ENCODE measurements at regions of chr11 and their contacts with region 1.

Region 1: GRCh38 chr11:78645226-78646202 is 70.8 kb upstream of the NARS2 start:
- DNase-seq: peak; percentile 48
- H3K4me3 ChIP-seq: no peak overlapping the region
- H3K27ac ChIP-seq: no peak overlapping the region
- H3K27me3 ChIP-seq: no peaks in the 10 kb centered on the region
- CTCF ChIP-seq: peak; percentile 95

Region 2: DNA sequence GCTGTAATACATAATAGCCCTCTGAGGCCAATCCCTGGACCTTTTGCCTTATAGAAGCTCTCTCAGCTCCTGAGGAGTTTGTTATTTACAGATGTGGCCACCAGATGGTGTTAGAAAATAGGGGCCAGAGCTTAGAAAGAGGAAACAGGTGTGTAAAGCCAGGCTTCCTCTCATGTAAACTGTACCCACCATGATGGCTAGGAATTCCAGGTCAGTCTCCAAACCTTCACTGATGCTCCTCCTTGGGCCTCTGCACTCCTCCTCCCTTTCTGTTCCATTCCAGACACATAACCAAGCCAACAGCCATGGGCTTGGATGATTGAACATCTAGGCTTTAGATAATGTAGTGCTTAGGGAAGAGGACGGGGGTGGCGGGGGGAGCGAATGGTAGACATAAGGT is 417.0 kb before region 1 on chr11:
- CTCF ChIA-PET with region 1: no interaction called
- POLR2A ChIA-PET with region 1: no interaction called
- DNase-seq: peak; percentile 15
- H3K4me3 ChIP-seq: no peak overlapping the region
- H3K27ac ChIP-seq: no peak overlapping the region
- H3K27me3 ChIP-seq: no peaks in the 10 kb centered on the region
- CTCF ChIP-seq: peak; percentile 62

Region 3: DNA sequence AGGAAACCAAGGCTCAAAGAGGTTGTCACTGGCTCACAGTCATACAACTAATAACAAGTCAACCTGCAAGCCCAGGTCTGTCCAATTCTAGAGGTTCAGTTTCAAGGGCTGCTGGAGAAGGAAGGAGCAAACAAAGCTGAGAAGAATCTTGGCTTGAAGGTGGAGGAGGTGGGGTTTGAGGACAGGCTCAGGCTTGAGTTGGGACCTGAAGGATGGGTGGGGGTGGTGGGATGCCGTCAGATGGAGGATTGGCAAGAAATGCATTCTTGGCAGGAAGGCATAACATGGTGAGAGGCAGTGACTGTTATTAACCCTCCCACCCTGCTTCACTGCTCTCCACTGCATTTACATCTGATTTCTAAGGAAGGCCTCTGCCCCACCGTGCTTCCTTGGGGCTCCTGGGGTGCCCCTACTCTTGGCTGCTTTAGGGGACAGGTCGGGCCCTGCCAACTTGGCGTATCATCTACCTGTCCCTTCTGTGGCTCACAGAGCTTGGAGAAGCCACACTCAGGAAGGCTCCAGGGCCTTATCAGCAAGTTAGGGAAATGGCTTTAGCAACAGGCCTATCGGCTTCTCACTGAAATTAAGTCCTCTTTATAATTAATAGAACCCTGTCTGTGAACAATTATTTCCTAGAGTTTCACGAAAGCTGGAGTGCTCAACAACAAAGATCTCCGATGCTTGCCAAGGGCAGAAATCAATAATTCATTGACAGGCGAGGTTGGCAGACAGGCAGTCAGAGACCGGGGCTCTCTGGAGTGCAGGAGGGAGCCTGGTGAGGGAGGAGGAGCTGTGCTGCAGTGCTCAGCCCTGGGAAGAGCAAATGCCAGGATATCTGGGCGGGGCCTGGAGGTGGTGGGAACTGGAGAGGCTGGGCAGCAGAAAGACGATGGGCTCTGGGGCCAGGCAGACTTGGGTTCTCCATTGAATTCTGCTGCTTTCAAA is 14.1 kb after region 1 on chr11:
- CTCF ChIA-PET with region 1: interaction called, 27 read pairs
- POLR2A ChIA-PET with region 1: no interaction called
- DNase-seq: no peak
- H3K4me3 ChIP-seq: no peak overlapping the region
- H3K27ac ChIP-seq: no peak overlapping the region
- H3K27me3 ChIP-seq: no peaks in the 10 kb centered on the region
- CTCF ChIP-seq: no peak

Region 4: GRCh38 chr11:78791254-78791653 is 145.7 kb after region 1 on chr11:
- CTCF ChIA-PET with region 1: interaction called, 57 read pairs
- POLR2A ChIA-PET with region 1: no interaction called
- DNase-seq: no peak
- H3K4me3 ChIP-seq: no peak overlapping the region
- H3K27ac ChIP-seq: no peak overlapping the region
- H3K27me3 ChIP-seq: no peaks in the 10 kb centered on the region
- CTCF ChIP-seq: no peak

Region 5: DNA sequence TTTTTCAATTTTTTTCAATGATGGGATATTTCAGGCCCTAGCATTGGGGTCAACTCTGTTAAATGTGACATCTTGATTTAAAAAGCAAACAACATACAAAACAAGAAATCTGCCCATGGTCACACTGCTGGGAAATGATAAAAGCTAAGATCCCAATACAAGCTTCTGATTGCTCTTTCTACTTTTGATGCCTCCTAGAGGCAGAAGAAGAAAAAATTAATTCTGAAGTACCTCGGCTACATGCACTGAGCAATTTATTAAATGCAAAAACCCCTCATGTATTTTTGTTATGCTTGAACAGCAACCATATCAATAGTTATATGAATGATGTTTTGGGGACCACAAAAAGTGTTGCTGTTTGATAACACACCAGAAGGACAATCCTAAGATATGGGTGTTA is 271.2 kb after region 1 on chr11:
- CTCF ChIA-PET with region 1: interaction called, 17 read pairs
- POLR2A ChIA-PET with region 1: no interaction called
- DNase-seq: no peak
- H3K4me3 ChIP-seq: no peak overlapping the region
- H3K27ac ChIP-seq: no peak overlapping the region
- H3K27me3 ChIP-seq: peaks cover 5% of the 10 kb centered on the region
- CTCF ChIP-seq: peak; percentile 28; the same call in 1 of the 2 replicates

Region 6: GRCh38 chr11:79069504-79069903 is 424.0 kb after region 1 on chr11:
- CTCF ChIA-PET with region 1: interaction called, 15 read pairs
- POLR2A ChIA-PET with region 1: no interaction called
- DNase-seq: no peak
- H3K4me3 ChIP-seq: no peak overlapping the region
- H3K27ac ChIP-seq: no peak overlapping the region
- H3K27me3 ChIP-seq: no peaks in the 10 kb centered on the region
- CTCF ChIP-seq: no peak

Region 7: GRCh38 chr11:79100093-79100910 is 454.8 kb after region 1 on chr11:
- CTCF ChIA-PET with region 1: interaction called, 128 read pairs
- POLR2A ChIA-PET with region 1: no interaction called
- DNase-seq: no peak
- H3K4me3 ChIP-seq: no peak overlapping the region
- H3K27ac ChIP-seq: no peak overlapping the region
- H3K27me3 ChIP-seq: no peaks in the 10 kb centered on the region
- CTCF ChIP-seq: peak; percentile 88

Region 8: DNA sequence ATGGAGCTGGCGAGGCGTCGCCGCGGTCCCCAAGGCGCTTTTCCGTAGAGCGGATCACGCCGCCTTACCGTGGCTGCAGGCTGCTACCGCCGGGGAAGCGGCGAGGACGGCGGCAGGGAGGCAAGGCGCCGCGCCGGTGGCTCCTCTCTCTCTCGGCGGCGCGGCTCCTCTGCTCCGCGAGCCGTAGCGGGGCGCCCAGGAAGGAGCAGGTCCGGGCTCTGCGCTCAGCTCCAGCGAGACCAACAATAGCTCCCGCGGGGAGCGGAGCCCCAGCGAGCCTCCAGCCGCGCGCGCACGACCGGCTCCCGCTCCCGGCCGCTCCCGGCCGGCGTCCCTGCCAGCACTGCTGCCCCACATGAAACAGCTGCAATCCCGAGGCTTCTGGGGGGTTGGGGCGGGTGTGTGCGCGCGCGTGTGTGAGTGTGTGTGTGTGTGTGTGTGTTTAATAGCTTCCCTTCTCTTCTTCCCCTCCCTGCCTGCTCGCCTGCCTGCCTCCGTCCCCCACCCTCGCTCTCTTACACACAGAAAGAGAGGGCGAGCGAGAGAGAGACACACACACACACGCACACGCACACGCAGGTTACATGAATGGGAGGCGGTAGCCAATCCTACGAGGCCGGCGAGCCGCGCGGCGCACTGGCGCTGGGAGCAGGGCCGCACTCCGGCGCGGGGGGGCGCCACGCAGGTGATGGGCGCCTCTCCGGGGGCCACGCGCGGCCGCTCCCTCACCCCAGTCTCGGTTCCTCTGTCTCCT is 795.1 kb after region 1 on chr11 and contains the start of gene TENM4:
- CTCF ChIA-PET with region 1: interaction called, 16 read pairs
- POLR2A ChIA-PET with region 1: no interaction called
- DNase-seq: peak; percentile 77
- H3K4me3 ChIP-seq: peak within 1 kb of the TSS; percentile 87
- H3K27ac ChIP-seq: peak within 1 kb of the TSS; percentile 68
- H3K27me3 ChIP-seq: peaks cover 6% of the 10 kb centered on the region
- CTCF ChIP-seq: no peak
- polyA plus RNA-seq, gene TENM4: 5.5 and 8.4 TPM in 2 replicates